Natural killer cell (primary cell): ENCODE measurements at regions of chr19 and their contacts with region 1.

Region 1: GRCh38 chr19:12796146-12797071 is 5.1 kb downstream of the JUNB start:
- DNase-seq: peak; percentile 73 to 91
- ATAC-seq: peak in 1 of 3 donors; percentile 15
- H3K4me3 ChIP-seq: no peak overlapping the region
- H3K4me3 Mint-ChIP-seq: peak overlapping the region; percentile 81
- H3K27ac ChIP-seq: peak overlapping the region; percentile 27
- H3K27ac Mint-ChIP-seq: peak overlapping the region; percentile 77 to 97
- H3K4me1 ChIP-seq: peaks cover 37% of the 10 kb centered on the region
- H3K4me1 Mint-ChIP-seq: peaks cover 29% of the 10 kb centered on the region in 2 donors
- H3K27me3 ChIP-seq: peaks cover 2% of the 10 kb centered on the region
- H3K27me3 Mint-ChIP-seq: peaks cover 0 to 7% of the 10 kb centered on the region in 2 donors
- CTCF ChIP-seq: peak; percentile 82

Region 2: GRCh38 chr19:12766051-12766521 is 30.3 kb before region 1 on chr19:
- intact Hi-C with region 1: loop called (anchors 1 kb)
- DNase-seq: peak; percentile 80 to 88
- ATAC-seq: peak; percentile 80 to 98 (median 94)
- H3K4me3 ChIP-seq: no peak overlapping the region
- H3K4me3 Mint-ChIP-seq: no peak overlapping the region
- H3K27ac ChIP-seq: no peak overlapping the region
- H3K27ac Mint-ChIP-seq: no peak overlapping the region
- H3K4me1 ChIP-seq: peaks cover 6% of the 10 kb centered on the region
- H3K4me1 Mint-ChIP-seq: peaks cover 0 to 6% of the 10 kb centered on the region in 2 donors
- H3K27me3 ChIP-seq: no peaks in the 10 kb centered on the region
- H3K27me3 Mint-ChIP-seq: no peaks in the 10 kb centered on the region
- CTCF ChIP-seq: peak; percentile 92

Region 3: GRCh38 chr19:12777217-12778016 is 19.0 kb before region 1 on chr19:
- intact Hi-C with region 1: loop called (anchors 1 kb)
- DNase-seq: peak; percentile 83 to 90
- ATAC-seq: peak; percentile 25 to 40 (median 30)
- H3K4me3 ChIP-seq: peak overlapping the region; percentile 65
- H3K4me3 Mint-ChIP-seq: peak overlapping the region; percentile 86
- H3K27ac ChIP-seq: peak overlapping the region; percentile 85
- H3K27ac Mint-ChIP-seq: peak overlapping the region; percentile 83 to 90
- H3K4me1 ChIP-seq: peaks cover 54% of the 10 kb centered on the region
- H3K4me1 Mint-ChIP-seq: peaks cover 16 to 36% of the 10 kb centered on the region in 2 donors
- H3K27me3 ChIP-seq: no peaks in the 10 kb centered on the region
- H3K27me3 Mint-ChIP-seq: no peaks in the 10 kb centered on the region
- CTCF ChIP-seq: peak; percentile 96